Heart right ventricle (tissue), 16 donors: ENCODE measurements at regions of chr1 and their contacts with region 1.

Region 1: DNA sequence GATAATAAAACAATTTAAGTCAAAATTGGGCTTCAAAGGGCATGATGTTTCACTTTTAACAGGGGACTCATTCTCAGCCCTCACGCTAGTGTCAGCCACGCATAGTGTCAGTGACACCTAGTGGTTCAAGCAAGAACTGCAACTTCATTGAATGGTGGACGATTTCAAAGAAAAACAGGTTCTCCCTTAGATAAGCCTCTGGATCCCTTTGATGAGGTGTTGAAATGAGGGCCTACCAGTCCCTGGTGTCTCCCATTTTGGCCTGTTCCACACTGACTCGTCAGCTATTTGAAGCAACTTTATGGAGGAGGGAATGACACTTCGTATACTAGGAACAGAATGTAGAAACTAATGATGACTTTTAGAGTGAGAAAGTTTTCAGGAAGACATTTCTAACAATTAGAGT is 56.2 kb downstream of the FCRL5 start:
- DNase-seq: peak in 1 of 2 donors; percentile 11
- ATAC-seq: peak in 3 of 8 donors; percentile 42 to 56 (median 51)
- H3K4me3 ChIP-seq: no peak overlapping the region
- H3K27ac ChIP-seq: no peak overlapping the region
- H3K4me1 ChIP-seq: no peaks in the 10 kb centered on the region
- H3K27me3 ChIP-seq: peaks cover 0 to 53% (median 25%) of the 10 kb centered on the region in 7 donors
- CTCF ChIP-seq: peak; percentile 73 to 92 (median 89)

Region 2: DNA sequence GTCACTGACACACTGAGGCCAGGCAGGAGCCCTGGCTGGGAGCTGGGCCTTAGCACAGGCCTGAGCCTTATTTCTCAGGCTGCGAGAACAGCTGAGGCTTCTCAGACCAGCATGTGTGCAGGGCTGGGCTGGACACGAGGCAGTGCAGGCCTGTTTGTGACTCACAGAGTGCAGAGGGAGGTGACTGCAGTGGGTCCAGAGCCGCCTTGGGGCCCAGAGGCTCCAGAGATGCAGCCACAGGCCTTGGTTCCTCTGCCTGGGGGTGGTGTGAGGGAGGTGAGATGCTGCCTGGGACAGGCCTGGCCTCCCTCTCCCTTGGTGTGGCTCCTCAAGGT is 296.7 kb before region 1 on chr1:
- intact Hi-C with region 1: loop called in 3 of 10 experiments (anchors 5 kb)
- DNase-seq: no peak
- ATAC-seq: no peak
- H3K4me3 ChIP-seq: no peak overlapping the region
- H3K27ac ChIP-seq: no peak overlapping the region
- H3K4me1 ChIP-seq: peaks cover 0 to 5% (median 0%) of the 10 kb centered on the region in 9 donors
- H3K27me3 ChIP-seq: peaks cover 8 to 56% (median 40%) of the 10 kb centered on the region in 7 donors
- CTCF ChIP-seq: no peak

Region 3: DNA sequence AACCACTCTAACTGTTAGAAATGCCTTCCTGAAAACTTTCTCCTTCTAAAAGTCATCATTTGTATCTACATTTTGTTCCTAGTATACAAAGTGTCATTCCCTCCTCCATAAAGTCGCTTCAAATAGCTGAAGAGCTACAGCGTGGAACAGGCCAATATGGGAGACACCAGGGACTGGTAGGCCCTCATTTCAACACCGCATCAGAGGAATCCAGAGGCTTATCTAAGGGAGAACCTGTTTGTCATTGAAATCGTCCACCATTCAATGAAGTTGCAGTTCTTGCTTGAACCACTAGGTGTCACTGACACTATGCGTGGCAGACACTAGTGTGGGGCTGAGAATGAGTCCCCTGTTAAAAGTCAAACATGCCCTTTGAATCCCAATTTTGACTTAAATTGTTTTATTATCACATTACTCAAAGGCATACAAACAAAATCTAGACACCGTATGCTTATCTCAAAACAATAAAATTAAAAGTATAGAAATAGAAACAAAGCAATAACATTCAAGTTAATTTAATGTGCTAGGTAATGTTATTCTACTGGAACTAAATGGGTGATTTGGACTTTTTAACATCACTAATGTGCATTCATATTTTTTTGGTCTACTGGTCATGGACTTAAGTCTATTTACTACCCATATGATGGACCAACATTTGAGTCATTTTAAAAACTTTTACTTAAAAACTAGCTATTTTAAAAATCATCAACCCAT is 126.2 kb before region 1 on chr1:
- intact Hi-C with region 1: loop called in 4 of 10 experiments (anchors 5 kb)
- DNase-seq: peak in 1 of 2 donors; percentile 25
- ATAC-seq: peak in 3 of 8 donors; percentile 59 to 71 (median 62)
- H3K4me3 ChIP-seq: no peak overlapping the region
- H3K27ac ChIP-seq: no peak overlapping the region
- H3K4me1 ChIP-seq: no peaks in the 10 kb centered on the region
- H3K27me3 ChIP-seq: peaks cover 0 to 16% (median 8%) of the 10 kb centered on the region in 7 donors
- CTCF ChIP-seq: peak; percentile 81 to 96 (median 94)

Region 4: GRCh38 chr1:157523774-157524493 is 27.8 kb after region 1 on chr1:
- intact Hi-C with region 1: no loop called
- DNase-seq: no peak
- ATAC-seq: no peak
- H3K4me3 ChIP-seq: no peak overlapping the region
- H3K27ac ChIP-seq: no peak overlapping the region
- H3K4me1 ChIP-seq: no peaks in the 10 kb centered on the region
- H3K27me3 ChIP-seq: peaks cover 0 to 37% (median 21%) of the 10 kb centered on the region in 7 donors
- CTCF ChIP-seq: no peak

Region 5: DNA sequence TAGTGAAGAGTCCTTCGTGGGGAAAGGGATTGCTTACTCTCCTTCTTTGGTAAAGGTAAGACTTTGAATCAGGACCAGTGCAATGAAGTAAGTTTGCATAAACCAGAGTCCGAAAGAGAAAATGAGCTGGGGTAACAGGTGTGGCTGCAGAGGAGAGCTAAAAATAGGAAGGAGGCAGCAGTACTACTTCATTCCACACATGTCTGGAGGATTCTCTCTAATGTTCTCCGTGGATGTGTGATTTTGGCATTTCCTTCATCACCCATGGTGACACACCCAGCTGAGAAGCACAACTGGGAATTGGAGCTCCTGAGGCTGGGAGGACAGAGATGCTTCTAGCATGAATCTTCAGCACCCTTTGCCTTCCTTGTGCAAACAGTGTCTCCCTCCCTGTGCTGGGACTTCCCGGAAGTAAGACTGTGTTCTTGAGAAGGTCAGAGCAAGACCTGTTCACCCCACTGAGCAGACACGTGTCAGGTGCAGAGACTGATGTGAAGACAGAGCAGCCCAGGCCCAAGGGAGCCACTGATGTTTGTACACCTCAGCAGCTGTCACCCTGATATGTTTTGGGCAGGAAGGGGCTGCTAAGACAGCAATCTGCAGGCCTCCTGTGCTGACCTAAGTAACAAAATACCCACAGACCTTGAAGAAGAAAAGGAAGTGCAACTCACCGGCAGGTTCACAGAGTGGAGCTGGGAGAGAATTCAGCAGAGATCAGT is 310.5 kb after region 1 on chr1:
- intact Hi-C with region 1: no loop called
- DNase-seq: no peak
- ATAC-seq: no peak
- H3K4me3 ChIP-seq: no peak overlapping the region
- H3K27ac ChIP-seq: no peak overlapping the region
- H3K4me1 ChIP-seq: no peaks in the 10 kb centered on the region
- H3K27me3 ChIP-seq: no peaks in the 10 kb centered on the region
- CTCF ChIP-seq: no peak